GM12878 (cell line): ENCODE measurements at regions of chr12 and their contacts with region 1.

Region 1: DNA sequence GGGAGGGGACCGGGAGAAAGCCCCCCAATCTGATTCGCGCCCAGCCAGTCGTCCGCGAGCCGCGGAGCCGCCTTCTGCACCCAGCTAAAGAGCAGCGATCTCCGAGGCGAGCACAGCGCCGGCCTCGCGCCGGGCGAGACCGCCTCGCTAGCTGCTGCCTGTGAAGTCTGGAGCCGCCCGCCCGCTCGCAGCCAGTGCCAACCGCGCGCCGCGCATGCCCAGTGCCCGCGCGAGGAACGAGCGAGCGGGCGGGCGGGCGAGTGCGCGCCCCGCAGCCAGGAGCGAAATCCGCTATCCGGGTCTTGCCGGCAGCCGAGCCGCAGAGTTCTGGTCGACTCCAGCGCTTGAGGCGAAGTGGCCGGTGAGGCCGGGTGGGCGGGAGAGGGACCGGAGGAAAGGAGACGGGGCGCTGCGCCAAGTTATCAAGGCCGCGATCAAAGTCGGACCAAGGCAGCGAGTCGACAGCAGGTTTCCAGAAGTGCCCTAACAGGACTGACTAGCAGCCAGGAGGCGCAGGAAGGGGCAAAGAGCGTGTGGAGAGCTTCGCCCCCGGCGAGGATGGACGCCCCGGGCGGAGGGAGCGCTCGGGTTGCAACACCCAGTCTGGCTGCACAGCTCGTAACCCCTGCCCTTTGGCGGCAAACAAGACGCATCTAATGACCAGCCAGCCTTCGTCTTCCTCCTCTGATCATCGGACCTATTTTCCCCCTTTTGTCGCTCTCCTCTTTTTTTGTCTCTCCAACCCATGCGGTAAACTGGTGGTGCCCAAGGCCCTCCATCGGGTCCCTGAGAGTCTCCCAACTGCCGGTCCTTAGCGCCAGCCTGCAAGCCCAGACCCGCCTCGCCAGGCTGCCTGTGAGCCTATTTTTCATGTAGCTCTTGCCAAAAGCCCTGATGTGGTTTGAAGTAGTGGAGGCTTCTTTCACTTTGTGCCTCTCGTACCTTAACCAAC is at the start of gene EPS8:
- DNase-seq: peak; percentile 50
- ATAC-seq: peak; percentile 87
- H3K4me3 ChIP-seq: peak within 1 kb of the TSS; percentile 79
- H3K27ac ChIP-seq: no peak within 1 kb of the TSS
- H3K4me1 ChIP-seq: no peaks in the 10 kb centered on the region
- H3K27me3 ChIP-seq: peaks cover 0 to 8% of the 10 kb centered on the region in 2 experiments; a peak in 2 of 4 replicates
- CTCF ChIP-seq: no peak
- EP300 ChIP-seq: 0 out of 4 replicates have a peak, but pooled peaks of 1 of the 2 experiments have one; percentile 18
- POLR2A ChIP-seq: peak; percentile 61; the same call in 1 of the 2 replicates
- RAD21 ChIP-seq: no peak
- polyA plus RNA-seq, gene EPS8: 1.3 to 1.6 TPM

Region 2: DNA sequence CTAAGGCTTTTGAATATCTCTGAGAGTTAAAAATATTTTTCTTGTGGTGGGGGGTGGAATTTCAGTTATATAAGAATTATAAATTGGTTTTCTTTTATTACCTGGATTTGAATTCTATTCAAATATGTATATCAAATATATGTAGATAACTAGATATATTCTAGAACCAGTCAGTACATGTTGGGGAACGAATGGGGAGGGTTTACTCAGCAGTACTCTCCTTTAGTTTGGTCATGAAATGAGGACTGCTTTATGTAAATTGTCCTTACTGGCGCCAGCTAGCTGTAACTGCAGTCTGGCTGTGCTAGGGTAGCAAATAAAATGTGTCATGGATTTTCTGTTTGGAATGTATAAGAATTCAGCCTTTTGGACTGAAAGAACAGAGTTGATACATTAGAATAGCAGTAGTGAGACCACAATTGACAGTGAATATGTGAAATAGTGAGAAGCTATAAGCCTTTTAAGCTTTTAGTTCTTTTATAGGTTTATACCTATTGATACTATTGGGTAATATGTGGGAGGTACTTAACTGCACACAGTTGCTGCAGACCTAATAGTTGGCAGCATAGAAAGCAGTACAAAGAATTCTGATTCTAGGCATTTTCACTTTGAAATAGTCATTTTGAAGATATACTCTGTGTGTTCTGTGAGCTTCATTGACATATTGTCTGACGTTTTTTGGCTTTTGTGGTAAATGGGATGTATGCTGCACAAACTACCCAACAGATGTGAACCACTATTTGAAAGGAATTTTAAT is 1395.0 kb before region 1 on chr12:
- CTCF ChIA-PET with region 1: no interaction called
- POLR2A ChIA-PET with region 1: no interaction called
- RAD21 ChIA-PET with region 1: no interaction called
- SMC1A ChIA-PET with region 1: no interaction called
- in situ Hi-C with region 1: no loop called
- intact Hi-C with region 1: loop called (anchors 10 kb)
- DNase-seq: peak; percentile 65
- ATAC-seq: peak; percentile 77
- H3K4me3 ChIP-seq: 0 out of 2 replicates have a peak overlapping the region, but pooled peaks have one; percentile 18
- H3K27ac ChIP-seq: peak overlapping the region; percentile 82
- H3K4me1 ChIP-seq: peaks cover 11% of the 10 kb centered on the region; the same call in 1 of the 2 replicates
- H3K27me3 ChIP-seq: no peaks in the 10 kb centered on the region
- CTCF ChIP-seq: no peak; a peak in 1 of 6 replicates
- EP300 ChIP-seq: no peak
- POLR2A ChIP-seq: 0 out of 2 replicates have a peak, but pooled peaks have one; percentile 22
- RAD21 ChIP-seq: no peak

Region 3: DNA sequence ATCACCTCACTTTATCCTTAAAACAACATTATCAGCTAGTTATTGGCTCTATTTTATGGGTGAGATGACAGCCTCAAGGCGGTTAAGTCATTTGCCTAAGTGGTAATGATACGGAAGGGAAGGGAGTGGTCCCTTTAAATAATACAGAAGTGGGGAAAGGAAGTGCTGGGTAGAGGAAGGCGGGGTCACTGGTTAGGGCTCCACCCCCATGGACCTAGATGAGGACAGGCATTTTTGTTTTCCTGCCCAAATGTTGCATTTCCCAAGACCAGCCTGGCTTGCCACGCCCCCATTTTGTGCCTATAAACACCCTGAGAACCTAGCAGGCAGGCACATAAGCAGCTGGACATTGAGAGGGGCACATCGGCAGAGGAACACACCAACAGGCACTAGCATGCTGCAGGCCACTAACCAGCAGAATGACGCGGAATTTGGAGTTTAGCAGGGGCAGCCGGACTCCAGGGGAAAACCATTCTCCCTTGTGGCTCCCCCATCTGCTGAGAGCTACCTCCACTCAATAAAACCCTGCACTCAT is 101.2 kb before region 1 on chr12:
- CTCF ChIA-PET with region 1: no interaction called
- POLR2A ChIA-PET with region 1: interaction called, 7 read pairs
- RAD21 ChIA-PET with region 1: interaction called, 3 read pairs
- SMC1A ChIA-PET with region 1: interaction called, 3 read pairs
- in situ Hi-C with region 1: no loop called
- intact Hi-C with region 1: loop called (anchors 5 kb)
- DNase-seq: no peak
- ATAC-seq: peak; percentile 85
- H3K4me3 ChIP-seq: no peak overlapping the region
- H3K27ac ChIP-seq: no peak overlapping the region
- H3K4me1 ChIP-seq: 0 out of 2 replicates have a peak, but pooled peaks cover 7% of the 10 kb centered on the region
- H3K27me3 ChIP-seq: no peaks in the 10 kb centered on the region
- CTCF ChIP-seq: no peak
- EP300 ChIP-seq: no peak
- POLR2A ChIP-seq: no peak
- RAD21 ChIP-seq: no peak

Region 4: GRCh38 chr12:15778126-15778525 is 11.4 kb before region 1 on chr12:
- CTCF ChIA-PET with region 1: interaction called, 61 read pairs
- POLR2A ChIA-PET with region 1: interaction called, 48 read pairs
- RAD21 ChIA-PET with region 1: interaction called, 53 read pairs
- SMC1A ChIA-PET with region 1: interaction called, 201 read pairs
- in situ Hi-C with region 1: no loop called
- intact Hi-C with region 1: loop called (anchors 2 kb)
- DNase-seq: no peak
- ATAC-seq: peak; percentile 26
- H3K4me3 ChIP-seq: no peak overlapping the region
- H3K27ac ChIP-seq: no peak overlapping the region
- H3K4me1 ChIP-seq: no peaks in the 10 kb centered on the region
- H3K27me3 ChIP-seq: no peaks in the 10 kb centered on the region
- CTCF ChIP-seq: no peak
- EP300 ChIP-seq: no peak
- POLR2A ChIP-seq: no peak
- RAD21 ChIP-seq: no peak

Region 5: GRCh38 chr12:16130343-16130742 is 340.8 kb after region 1 on chr12:
- CTCF ChIA-PET with region 1: no interaction called
- POLR2A ChIA-PET with region 1: no interaction called
- RAD21 ChIA-PET with region 1: no interaction called
- SMC1A ChIA-PET with region 1: no interaction called
- in situ Hi-C with region 1: no loop called
- intact Hi-C with region 1: no loop called
- DNase-seq: no peak
- ATAC-seq: no peak
- H3K4me3 ChIP-seq: no peak overlapping the region
- H3K27ac ChIP-seq: no peak overlapping the region
- H3K4me1 ChIP-seq: no peaks in the 10 kb centered on the region
- H3K27me3 ChIP-seq: no peaks in the 10 kb centered on the region
- CTCF ChIP-seq: no peak
- EP300 ChIP-seq: no peak
- POLR2A ChIP-seq: no peak
- RAD21 ChIP-seq: no peak

Region 6: DNA sequence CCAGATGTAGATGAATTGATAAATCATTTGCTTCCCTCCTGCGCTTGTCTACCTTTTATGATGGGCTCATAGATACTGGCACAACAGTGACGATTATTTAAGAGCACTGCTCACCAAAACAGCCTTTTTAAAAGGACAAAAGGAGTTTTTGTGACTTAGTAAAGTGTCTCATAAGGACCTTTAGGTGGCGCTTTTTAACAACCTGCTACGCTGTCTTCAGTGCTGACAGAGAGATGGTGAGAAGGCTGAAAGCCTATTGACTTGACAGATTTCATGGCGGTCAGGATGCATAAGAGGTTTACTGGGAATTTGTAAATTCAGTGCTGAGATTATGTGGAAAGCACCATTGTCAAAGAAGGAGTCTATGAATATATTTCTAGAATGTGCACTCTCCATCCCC is 400.4 kb after region 1 on chr12:
- CTCF ChIA-PET with region 1: no interaction called
- POLR2A ChIA-PET with region 1: no interaction called
- RAD21 ChIA-PET with region 1: no interaction called
- SMC1A ChIA-PET with region 1: no interaction called
- in situ Hi-C with region 1: no loop called
- intact Hi-C with region 1: no loop called
- DNase-seq: no peak
- ATAC-seq: no peak
- H3K4me3 ChIP-seq: no peak overlapping the region
- H3K27ac ChIP-seq: no peak overlapping the region
- H3K4me1 ChIP-seq: no peaks in the 10 kb centered on the region
- H3K27me3 ChIP-seq: no peaks in the 10 kb centered on the region
- CTCF ChIP-seq: no peak
- EP300 ChIP-seq: no peak
- POLR2A ChIP-seq: no peak
- RAD21 ChIP-seq: no peak